Gastrocnemius medialis (tissue), 4 donors: ENCODE measurements at regions of chr11 and their contacts with region 1.

Region 1: GRCh38 chr11:119057000-119057769 is at the start of gene HYOU1:
- DNase-seq: peak; percentile 97
- ATAC-seq: peak; percentile 92 to 93
- H3K4me3 ChIP-seq: peak within 1 kb of the TSS; percentile 73 to 92 (median 80)
- H3K27ac ChIP-seq: peak within 1 kb of the TSS; percentile 83 to 95 (median 88)
- H3K4me1 ChIP-seq: peaks cover 13 to 16% of the 10 kb centered on the region in 2 donors
- H3K27me3 ChIP-seq: no peaks in the 10 kb centered on the region
- CTCF ChIP-seq: peak in 2 of 5 experiments; percentile 19 to 36
- POLR2A ChIP-seq: peak; percentile 94 to 95
- total RNA-seq, gene HYOU1: 18.4 to 29.2 (median 21.9) TPM

Region 2: GRCh38 chr11:119030329-119031049 is 26.7 kb before region 1 on chr11 and contains the start of gene SLC37A4:
- in situ Hi-C with region 1: no loop called
- intact Hi-C with region 1: loop called (anchors 1 kb)
- DNase-seq: peak; percentile 98 to 99
- ATAC-seq: peak; percentile 77
- H3K4me3 ChIP-seq: peak within 1 kb of the TSS; percentile 83 to 94 (median 91)
- H3K27ac ChIP-seq: peak within 1 kb of the TSS; percentile 92 to 98 (median 94)
- H3K4me1 ChIP-seq: peaks cover 48 to 50% of the 10 kb centered on the region in 2 donors
- H3K27me3 ChIP-seq: no peaks in the 10 kb centered on the region
- CTCF ChIP-seq: peak; percentile 87 to 92 (median 90)
- POLR2A ChIP-seq: peak; percentile 82 to 85
- total RNA-seq, gene SLC37A4: 29.7 to 72.9 (median 56.4) TPM

Region 3: DNA sequence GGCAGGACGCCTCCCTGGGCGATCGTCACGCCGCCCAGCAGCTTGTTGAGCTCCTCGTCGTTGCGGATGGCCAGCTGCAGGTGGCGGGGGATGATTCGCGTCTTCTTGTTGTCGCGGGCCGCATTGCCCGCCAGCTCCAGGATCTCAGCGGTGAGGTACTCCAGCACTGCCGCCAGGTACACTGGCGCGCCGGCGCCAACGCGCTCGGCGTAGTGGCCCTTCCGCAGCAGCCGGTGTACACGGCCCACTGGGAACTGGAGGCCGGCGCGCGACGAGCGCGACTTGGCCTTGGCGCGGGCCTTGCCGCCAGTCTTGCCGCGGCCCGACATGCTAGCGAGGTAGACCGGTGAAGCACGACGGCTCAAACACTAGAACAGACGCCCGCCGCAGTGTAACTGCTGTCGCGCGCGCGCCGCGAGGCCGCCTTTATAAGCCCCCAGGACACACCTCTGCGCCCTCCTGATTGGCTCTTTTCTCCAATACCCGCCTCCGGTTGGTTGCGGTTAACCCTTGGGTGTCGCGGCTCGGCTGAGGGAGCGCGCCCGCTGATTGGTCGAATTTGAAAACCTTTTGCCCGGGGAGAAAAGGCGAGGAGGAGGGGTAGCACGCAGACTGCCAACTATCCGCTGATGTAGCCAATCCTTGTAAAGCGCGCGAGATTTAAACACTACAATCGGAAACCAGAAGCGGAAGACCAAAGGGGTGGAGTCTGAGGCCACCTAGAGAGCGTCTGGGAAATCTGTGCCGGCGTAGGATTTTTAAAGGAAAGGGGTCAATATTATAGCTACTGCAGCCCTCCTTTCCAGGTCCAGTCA is 38.1 kb after region 1 on chr11:
- in situ Hi-C with region 1: no loop called
- intact Hi-C with region 1: loop called (anchors 2 kb)
- DNase-seq: peak; percentile 99 to 100
- ATAC-seq: peak; percentile 94
- H3K4me3 ChIP-seq: peak overlapping the region; percentile 69 to 99 (median 88)
- H3K27ac ChIP-seq: peak overlapping the region; percentile 91 to 98 (median 94)
- H3K4me1 ChIP-seq: peaks cover 17 to 24% of the 10 kb centered on the region in 2 donors
- H3K27me3 ChIP-seq: no peaks in the 10 kb centered on the region
- CTCF ChIP-seq: peak in 4 of 5 experiments; percentile 18 to 70 (median 35)
- POLR2A ChIP-seq: peak; percentile 99 to 100